ENCODE measurements at regions of chr1 and their contacts with region 1.

Region 1: DNA sequence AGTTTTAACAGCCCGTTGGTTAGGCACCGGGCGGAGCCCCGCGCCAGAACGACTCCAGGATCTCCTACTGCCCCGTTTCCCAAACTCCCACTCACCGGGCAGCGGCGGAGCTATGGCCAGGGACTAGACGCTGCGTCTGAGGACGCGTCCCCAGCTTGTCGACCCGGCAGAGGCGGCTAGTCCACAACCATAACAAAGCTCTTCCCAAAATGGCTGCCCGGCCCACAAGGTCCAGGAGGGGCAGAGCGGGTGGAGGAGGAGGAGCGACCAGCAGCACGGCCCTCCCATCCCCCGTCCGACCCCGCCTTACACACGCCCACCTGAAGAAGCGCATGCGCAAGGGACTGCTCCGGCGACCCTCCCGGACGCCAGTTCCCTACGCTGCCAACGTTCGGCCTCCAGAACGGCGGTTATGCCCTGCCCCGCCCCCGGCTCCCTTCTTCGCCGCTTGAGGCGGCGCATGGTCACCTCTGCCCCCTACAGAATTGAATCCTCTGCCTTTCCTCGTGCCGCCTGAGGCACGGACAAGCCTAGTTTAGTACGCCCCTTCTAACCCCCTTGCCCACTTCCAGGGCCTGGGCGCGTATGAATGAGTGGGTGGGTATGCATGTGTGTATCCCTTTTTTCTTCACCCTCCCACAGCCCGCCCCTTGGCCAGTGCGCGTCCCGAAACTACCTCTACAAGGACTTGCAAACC is at the start of gene GPBP1L1:
- DNase-seq: peak; percentile 99
- H3K4me3 ChIP-seq: peak within 1 kb of the TSS; percentile 77 to 95 (median 92)
- H3K27ac ChIP-seq: peak within 1 kb of the TSS; percentile 93 to 97 (median 96)
- H3K4me1 ChIP-seq: peaks cover 29 to 69% (median 58%) of the 10 kb centered on the region in 4 donors
- H3K27me3 ChIP-seq: no peaks in the 10 kb centered on the region
- CTCF ChIP-seq: peak in 1 of 3 experiments; percentile 3
- EP300 ChIP-seq: no peak
- POLR2A ChIP-seq: peak; percentile 51
- total RNA-seq, gene GPBP1L1: 87.6 to 110 (median 98.7) TPM

Region 2: GRCh38 chr1:45584351-45585111 is 101.9 kb before region 1 on chr1:
- intact Hi-C with region 1: loop called (anchors 5 kb)
- DNase-seq: peak; percentile 97
- H3K4me3 ChIP-seq: peak overlapping the region; percentile 90 to 100 (median 92)
- H3K27ac ChIP-seq: peak overlapping the region; percentile 88 to 97 (median 94)
- H3K4me1 ChIP-seq: peaks cover 22 to 45% (median 29%) of the 10 kb centered on the region in 4 donors
- H3K27me3 ChIP-seq: no peaks in the 10 kb centered on the region
- CTCF ChIP-seq: no peak
- EP300 ChIP-seq: no peak
- POLR2A ChIP-seq: no peak

Region 3: GRCh38 chr1:45884700-45885099 is 198.2 kb after region 1 on chr1:
- intact Hi-C with region 1: loop called (anchors 10 kb)
- DNase-seq: no peak
- H3K4me3 ChIP-seq: no peak overlapping the region
- H3K27ac ChIP-seq: no peak overlapping the region
- H3K4me1 ChIP-seq: peaks cover 0 to 16% (median 2%) of the 10 kb centered on the region in 4 donors
- H3K27me3 ChIP-seq: no peaks in the 10 kb centered on the region
- CTCF ChIP-seq: no peak
- EP300 ChIP-seq: no peak
- POLR2A ChIP-seq: no peak

Measured in esophagus muscularis mucosa (tissue), 4 donors.